Activated T-helper 2 cell treated with anti-CD3 and anti-CD28 coated beads, Interferon-gamma antibody, Interleukin-2, Interleukin-4, amounts not matched to agents 10 μg/mL and 5 μg/mL and 100 μg/mL, durations not matched to agents 14 hours and 24 hours and 36 hours (primary cell): ENCODE measurements at regions of chr21 and their contacts with region 1.

Region 1: GRCh38 chr21:31088315-31088714 is 50.0 kb upstream of the KRTAP19-8 start:
- DNase-seq: no peak
- H3K4me3 Mint-ChIP-seq: no peak overlapping the region
- H3K27ac Mint-ChIP-seq: no peak overlapping the region
- H3K4me1 Mint-ChIP-seq: peaks cover 12% of the 10 kb centered on the region
- H3K27me3 Mint-ChIP-seq: peaks cover 39% of the 10 kb centered on the region

Region 2: GRCh38 chr21:30340441-30341241 is 747.7 kb before region 1 on chr21:
- intact Hi-C with region 1: loop called (anchors 2 kb)
- DNase-seq: no peak
- H3K4me3 Mint-ChIP-seq: no peak overlapping the region
- H3K27ac Mint-ChIP-seq: no peak overlapping the region
- H3K4me1 Mint-ChIP-seq: no peaks in the 10 kb centered on the region
- H3K27me3 Mint-ChIP-seq: no peaks in the 10 kb centered on the region

Region 3: DNA sequence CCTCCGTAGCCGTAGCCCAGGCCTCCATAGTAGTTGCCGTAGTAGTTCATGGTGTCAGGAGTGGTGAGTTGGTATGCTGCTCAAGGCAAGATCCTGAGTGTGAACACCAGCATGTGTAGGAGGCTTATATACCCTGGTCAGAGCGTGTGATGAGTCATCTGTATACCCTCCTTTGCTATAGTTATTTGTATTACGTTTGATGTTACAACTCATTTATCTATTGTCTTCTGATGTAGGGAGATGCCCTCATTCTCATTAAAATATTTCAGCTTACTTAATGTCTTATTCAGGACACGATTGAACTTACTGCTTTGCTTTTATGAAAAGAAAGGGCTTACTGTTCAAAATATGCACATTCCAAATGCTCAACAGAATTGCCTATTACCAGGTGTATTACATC is 586.3 kb before region 1 on chr21 and contains the start of gene KRTAP19-5:
- intact Hi-C with region 1: loop called (anchors 1 kb)
- DNase-seq: no peak
- H3K4me3 Mint-ChIP-seq: no peak within 1 kb of the TSS
- H3K27ac Mint-ChIP-seq: no peak within 1 kb of the TSS
- H3K4me1 Mint-ChIP-seq: no peaks in the 10 kb centered on the region
- H3K27me3 Mint-ChIP-seq: no peaks in the 10 kb centered on the region
- total RNA-seq, gene KRTAP19-5: not detected in 2 replicates

Region 4: DNA sequence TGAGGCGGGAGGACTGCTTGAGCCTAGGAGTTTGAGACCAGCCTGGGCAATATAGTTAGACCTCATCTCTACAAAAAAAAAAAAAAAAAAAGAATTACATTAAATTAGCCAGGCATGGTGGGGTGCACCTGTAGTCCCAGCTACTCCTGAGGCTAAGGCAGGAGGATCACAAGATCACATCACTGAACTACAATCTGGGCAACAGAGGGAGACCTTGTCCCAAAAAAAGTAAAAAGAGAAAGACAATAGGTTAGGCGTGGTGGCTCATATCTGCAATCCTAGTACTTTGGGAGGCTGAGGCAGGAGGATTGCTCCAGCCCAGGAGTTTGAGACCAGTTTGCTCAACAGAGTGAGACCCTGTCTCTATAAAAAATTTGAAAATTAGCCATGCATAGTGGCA is 125.5 kb after region 1 on chr21:
- intact Hi-C with region 1: no loop called
- DNase-seq: no peak
- H3K4me3 Mint-ChIP-seq: no peak overlapping the region
- H3K27ac Mint-ChIP-seq: no peak overlapping the region
- H3K4me1 Mint-ChIP-seq: peaks cover 2% of the 10 kb centered on the region
- H3K27me3 Mint-ChIP-seq: no peaks in the 10 kb centered on the region